HepG2 (cell line): ENCODE measurements at regions of chr11 and their contacts with region 1.

Region 1: GRCh38 chr11:4060182-4060923 is 34.2 kb upstream of the RRM1 start:
- DNase-seq: peak; percentile 80
- ATAC-seq: peak; percentile 89
- H3K4me3 ChIP-seq: no peak overlapping the region
- H3K27ac ChIP-seq: no peak overlapping the region
- H3K4me1 ChIP-seq: peaks cover 22% of the 10 kb centered on the region
- H3K27me3 ChIP-seq: no peaks in the 10 kb centered on the region; a peak in 1 of 5 replicates
- CTCF ChIP-seq: no peak
- EP300 ChIP-seq: 0 out of 4 replicates have a peak, but pooled peaks of 1 of the 2 experiments have one; percentile 42
- POLR2A ChIP-seq: no peak
- RAD21 ChIP-seq: no peak

Region 2: DNA sequence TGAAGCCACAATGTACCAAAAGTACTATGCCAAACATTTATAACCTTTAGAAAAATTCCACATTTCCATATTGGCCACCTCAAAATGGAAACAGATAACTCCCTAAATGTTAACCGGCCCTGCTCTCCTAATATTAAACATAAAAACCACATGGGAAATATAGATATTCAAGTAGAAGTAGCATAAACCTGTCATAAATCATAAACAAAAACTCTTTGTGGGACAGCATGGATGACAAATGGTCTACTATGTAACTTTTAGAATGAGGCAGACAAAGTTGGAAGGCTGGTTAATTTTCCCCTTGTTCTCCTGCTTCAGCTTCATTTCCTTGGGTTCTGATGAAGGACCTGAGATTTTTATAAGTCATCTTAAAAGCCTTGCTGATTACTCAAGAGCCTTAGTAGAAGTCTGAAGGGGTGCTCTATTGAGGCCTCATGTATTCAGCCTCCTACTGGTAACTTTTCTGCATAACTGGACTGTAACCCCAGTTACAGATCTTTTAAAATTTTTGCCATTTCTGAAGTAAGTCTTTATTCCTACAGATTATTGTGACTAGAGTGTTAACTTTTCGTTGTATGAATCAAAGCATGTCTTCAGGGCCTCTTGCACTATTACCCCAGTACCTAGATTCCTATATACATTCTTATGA is 88.5 kb before region 1 on chr11:
- CTCF ChIA-PET with region 1: no interaction called
- POLR2A ChIA-PET with region 1: no interaction called
- in situ Hi-C with region 1: no loop called
- intact Hi-C with region 1: no loop called
- DNase-seq: no peak
- ATAC-seq: no peak
- H3K4me3 ChIP-seq: no peak overlapping the region
- H3K27ac ChIP-seq: no peak overlapping the region
- H3K4me1 ChIP-seq: no peaks in the 10 kb centered on the region
- H3K27me3 ChIP-seq: no peaks in the 10 kb centered on the region
- CTCF ChIP-seq: no peak
- EP300 ChIP-seq: no peak
- POLR2A ChIP-seq: no peak
- RAD21 ChIP-seq: no peak

Region 3: DNA sequence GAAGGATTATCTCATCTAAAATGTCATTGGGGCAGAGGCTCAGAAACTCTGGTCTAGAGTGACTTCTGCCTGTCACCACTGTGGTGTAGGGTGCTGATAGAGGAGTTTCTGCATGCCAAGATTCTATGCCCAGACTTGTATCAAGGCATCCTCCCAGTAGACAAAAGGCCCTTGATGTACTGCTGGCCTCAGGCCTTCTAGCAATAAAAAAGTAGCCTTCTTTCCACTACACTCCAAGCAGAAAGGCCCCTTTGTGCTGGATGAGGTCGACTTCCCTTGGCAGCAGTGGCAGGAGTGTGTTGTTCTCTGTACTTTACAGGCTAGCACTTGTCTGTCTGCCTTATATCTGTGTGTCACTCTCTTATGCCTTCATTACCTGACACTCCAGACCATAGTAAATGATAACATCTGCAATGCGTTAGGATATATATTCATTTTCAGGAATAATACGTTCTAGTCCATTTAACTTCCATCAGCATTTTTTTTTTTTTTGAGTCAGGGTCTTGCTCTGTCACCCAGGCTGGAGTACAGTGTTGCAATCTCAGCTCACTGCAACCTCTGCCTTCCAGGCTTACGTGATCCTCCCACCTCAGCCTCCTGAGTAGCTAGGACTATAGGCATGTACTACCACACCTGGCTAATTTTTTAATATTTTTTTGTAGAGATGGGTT is 15.2 kb before region 1 on chr11:
- CTCF ChIA-PET with region 1: no interaction called
- POLR2A ChIA-PET with region 1: interaction called, 4 read pairs
- in situ Hi-C with region 1: no loop called
- intact Hi-C with region 1: loop called (anchors 2 kb)
- DNase-seq: peak; percentile 33
- ATAC-seq: peak; percentile 48
- H3K4me3 ChIP-seq: no peak overlapping the region
- H3K27ac ChIP-seq: peak overlapping the region; percentile 36
- H3K4me1 ChIP-seq: peaks cover 40% of the 10 kb centered on the region
- H3K27me3 ChIP-seq: no peaks in the 10 kb centered on the region
- CTCF ChIP-seq: no peak
- EP300 ChIP-seq: no peak
- POLR2A ChIP-seq: no peak
- RAD21 ChIP-seq: no peak